ENCODE measurements at regions of chr15 and their contacts with region 1.

Region 1: GRCh38 chr15:31344823-31345605 is 18.4 kb downstream of the KLF13 start:
- DNase-seq: no peak
- ATAC-seq: no peak
- H3K4me3 ChIP-seq: peak overlapping the region; percentile 44
- H3K4me3 Mint-ChIP-seq: peak overlapping the region; percentile 75 to 94 (median 85)
- H3K27ac ChIP-seq: peak overlapping the region; percentile 94
- H3K27ac Mint-ChIP-seq: peak overlapping the region; percentile 75 to 99 (median 97)
- H3K4me1 ChIP-seq: peaks cover 98 to 100% of the 10 kb centered on the region in 2 donors
- H3K4me1 Mint-ChIP-seq: peaks cover 79 to 100% (median 98%) of the 10 kb centered on the region in 7 donors
- H3K27me3 ChIP-seq: no peaks in the 10 kb centered on the region
- H3K27me3 Mint-ChIP-seq: no peaks in the 10 kb centered on the region

Region 2: GRCh38 chr15:31332020-31332680 is 12.9 kb before region 1 on chr15:
- CTCF ChIA-PET with region 1: interaction called, 4 read pairs
- POLR2A ChIA-PET with region 1: interaction called, 367 read pairs
- intact Hi-C with region 1: loop called (anchors 1 kb)
- DNase-seq: no peak
- ATAC-seq: no peak
- H3K4me3 ChIP-seq: peak overlapping the region; percentile 94
- H3K4me3 Mint-ChIP-seq: peak overlapping the region; percentile 85 to 99 (median 96)
- H3K27ac ChIP-seq: peak overlapping the region; percentile 98
- H3K27ac Mint-ChIP-seq: peak overlapping the region; percentile 21 to 99 (median 95)
- H3K4me1 ChIP-seq: peaks cover 75 to 78% of the 10 kb centered on the region in 2 donors
- H3K4me1 Mint-ChIP-seq: peaks cover 72 to 85% (median 78%) of the 10 kb centered on the region in 7 donors
- H3K27me3 ChIP-seq: no peaks in the 10 kb centered on the region
- H3K27me3 Mint-ChIP-seq: no peaks in the 10 kb centered on the region

Region 3: DNA sequence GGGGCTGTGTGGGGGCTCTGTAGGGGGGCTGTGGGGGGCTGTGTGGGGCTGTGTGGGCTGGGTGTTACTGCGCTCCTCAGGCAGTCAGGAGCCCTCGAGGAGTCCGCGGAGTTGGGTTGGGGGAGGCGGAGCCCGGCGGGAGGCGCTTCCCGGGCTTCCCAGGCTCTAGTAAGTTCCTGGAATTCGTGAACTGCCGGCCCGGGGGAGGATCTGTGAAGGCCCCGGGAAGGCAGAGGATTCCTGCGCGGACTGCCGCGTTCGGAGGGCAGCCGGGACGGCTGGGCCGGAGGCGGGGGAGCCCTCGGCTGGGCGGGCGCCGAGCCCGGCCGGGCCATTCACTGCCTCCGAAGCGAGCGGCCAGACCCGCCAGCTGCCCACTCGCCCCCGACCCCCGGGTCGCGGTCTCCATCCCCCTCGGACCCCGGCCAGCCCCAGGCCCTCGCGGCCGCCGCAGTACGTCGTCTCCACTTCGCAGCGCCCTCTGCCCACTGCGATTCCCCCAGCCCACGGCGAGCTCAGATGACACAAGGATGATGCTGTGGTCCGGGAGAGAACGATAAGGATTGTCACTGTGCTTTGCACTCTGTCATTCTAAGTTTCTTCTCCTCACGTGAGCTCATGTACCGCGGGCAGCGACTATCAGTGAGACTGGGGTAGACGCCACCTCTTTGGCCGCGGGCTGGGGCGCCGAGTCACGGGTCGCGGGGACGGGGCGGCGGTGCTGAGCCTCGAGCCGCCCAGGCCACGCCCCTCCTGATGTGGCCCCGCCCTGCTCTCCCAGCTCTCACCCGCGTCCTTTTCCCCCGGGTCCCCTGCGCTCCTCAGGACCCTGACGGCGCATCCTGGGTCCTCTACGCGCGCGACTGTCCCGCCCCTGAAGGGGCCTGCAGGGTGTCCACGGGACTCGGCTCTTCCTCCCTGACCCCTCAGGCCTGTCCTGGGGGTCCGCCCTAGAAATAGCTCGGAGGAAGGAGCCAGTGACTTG is 47.0 kb after region 1 on chr15:
- CTCF ChIA-PET with region 1: no interaction called
- POLR2A ChIA-PET with region 1: interaction called, 7 read pairs
- intact Hi-C with region 1: loop called in 1 of 2 experiments (anchors 1 kb)
- DNase-seq: peak; percentile 61 to 87 (median 73)
- ATAC-seq: peak; percentile 91
- H3K4me3 ChIP-seq: peak overlapping the region; percentile 72
- H3K4me3 Mint-ChIP-seq: peak overlapping the region; percentile 81 to 95 (median 90)
- H3K27ac ChIP-seq: peak overlapping the region; percentile 68
- H3K27ac Mint-ChIP-seq: peak overlapping the region; percentile 79 to 95 (median 88)
- H3K4me1 ChIP-seq: peaks cover 13 to 30% of the 10 kb centered on the region in 2 donors
- H3K4me1 Mint-ChIP-seq: peaks cover 21 to 61% (median 46%) of the 10 kb centered on the region in 7 donors
- H3K27me3 ChIP-seq: no peaks in the 10 kb centered on the region
- H3K27me3 Mint-ChIP-seq: no peaks in the 10 kb centered on the region

Measured in naive thymus-derived CD4-positive, alpha-beta T cell (primary cell).